Activated T-helper 1 cell treated with anti-CD3 and anti-CD28 coated beads, Interleukin-12 subunit alpha, Interleukin-12 subunit beta, Interleukin-2, Interleukin-4 antibody, amounts not matched to agents 30 ng/mL and 10 ng/mL and 1 ng/mL, durations not matched to agents 14 hours and 24 hours and 36 hours (primary cell): ENCODE measurements at regions of chrX and their contacts with region 1.

Region 1: GRCh38 chrX:3699821-3700381 is 13.5 kb downstream of the PRKX start:
- DNase-seq: no peak
- H3K4me3 Mint-ChIP-seq: peak overlapping the region; percentile 85
- H3K27ac Mint-ChIP-seq: peak overlapping the region; percentile 90
- H3K4me1 Mint-ChIP-seq: peaks cover 61% of the 10 kb centered on the region
- H3K27me3 Mint-ChIP-seq: no peaks in the 10 kb centered on the region

Region 2: GRCh38 chrX:3599802-3600430 is 100.0 kb before region 1 on chrX:
- intact Hi-C with region 1: no loop called
- DNase-seq: no peak
- H3K4me3 Mint-ChIP-seq: no peak overlapping the region
- H3K27ac Mint-ChIP-seq: no peak overlapping the region
- H3K4me1 Mint-ChIP-seq: no peaks in the 10 kb centered on the region
- H3K27me3 Mint-ChIP-seq: no peaks in the 10 kb centered on the region

Region 3: GRCh38 chrX:3638280-3638873 is 61.5 kb before region 1 on chrX:
- intact Hi-C with region 1: no loop called
- DNase-seq: no peak
- H3K4me3 Mint-ChIP-seq: no peak overlapping the region
- H3K27ac Mint-ChIP-seq: no peak overlapping the region
- H3K4me1 Mint-ChIP-seq: no peaks in the 10 kb centered on the region
- H3K27me3 Mint-ChIP-seq: no peaks in the 10 kb centered on the region

Region 4: DNA sequence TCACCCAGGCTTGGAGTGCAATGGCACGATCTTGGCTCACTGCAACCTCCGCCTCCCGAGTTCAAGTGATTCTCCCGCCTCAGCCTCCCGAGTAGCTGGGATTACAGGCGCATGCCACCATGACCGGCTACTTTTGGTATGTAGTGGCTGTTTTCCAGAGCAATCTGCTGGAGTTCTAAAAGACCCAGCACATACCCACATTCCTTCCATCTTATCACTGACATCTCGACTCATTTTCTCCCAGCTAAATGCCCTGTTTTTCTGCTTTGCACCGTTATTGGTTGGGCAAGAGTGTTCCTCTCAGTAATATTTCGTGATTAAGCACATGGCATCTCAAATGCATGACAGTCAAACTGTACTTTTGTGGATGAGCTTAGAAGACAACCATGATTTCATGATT is 40.1 kb before region 1 on chrX:
- intact Hi-C with region 1: no loop called
- DNase-seq: no peak
- H3K4me3 Mint-ChIP-seq: no peak overlapping the region
- H3K27ac Mint-ChIP-seq: no peak overlapping the region
- H3K4me1 Mint-ChIP-seq: peaks cover 8% of the 10 kb centered on the region
- H3K27me3 Mint-ChIP-seq: no peaks in the 10 kb centered on the region

Region 5: GRCh38 chrX:3738509-3738908 is 38.6 kb after region 1 on chrX:
- intact Hi-C with region 1: loop called (anchors 5 kb)
- DNase-seq: no peak
- H3K4me3 Mint-ChIP-seq: no peak overlapping the region
- H3K27ac Mint-ChIP-seq: peak overlapping the region; percentile 95
- H3K4me1 Mint-ChIP-seq: peaks cover 25% of the 10 kb centered on the region
- H3K27me3 Mint-ChIP-seq: no peaks in the 10 kb centered on the region